ENCODE measurements at regions of chr3 and their contacts with region 1.

Region 1: GRCh38 chr3:100463002-100463401 is 29.4 kb upstream of the TMEM45A start:
- DNase-seq: peak; percentile 65
- CTCF ChIP-seq: peak; percentile 80

Region 2: DNA sequence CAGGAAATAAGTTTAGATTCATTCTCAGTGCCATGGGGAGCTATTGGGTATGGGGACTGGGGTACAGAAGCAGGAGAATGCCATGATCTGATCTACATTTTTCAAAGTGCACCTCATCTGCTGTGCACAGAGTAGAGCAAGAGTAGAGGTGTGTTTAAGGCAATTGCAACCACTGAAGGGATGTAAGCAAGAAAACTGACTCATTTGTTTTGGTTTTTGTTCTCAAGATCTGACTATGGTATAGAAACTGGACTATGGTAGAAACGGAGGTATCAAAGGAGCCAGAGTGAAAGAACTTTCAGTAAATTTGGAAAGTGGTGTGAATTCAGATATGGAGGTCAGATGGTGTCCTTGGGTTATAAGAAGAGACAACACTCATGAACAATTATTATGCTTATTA is 731.5 kb before region 1 on chr3:
- CTCF ChIA-PET with region 1: no interaction called
- POLR2A ChIA-PET with region 1: no interaction called
- DNase-seq: no peak
- CTCF ChIP-seq: no peak

Region 3: DNA sequence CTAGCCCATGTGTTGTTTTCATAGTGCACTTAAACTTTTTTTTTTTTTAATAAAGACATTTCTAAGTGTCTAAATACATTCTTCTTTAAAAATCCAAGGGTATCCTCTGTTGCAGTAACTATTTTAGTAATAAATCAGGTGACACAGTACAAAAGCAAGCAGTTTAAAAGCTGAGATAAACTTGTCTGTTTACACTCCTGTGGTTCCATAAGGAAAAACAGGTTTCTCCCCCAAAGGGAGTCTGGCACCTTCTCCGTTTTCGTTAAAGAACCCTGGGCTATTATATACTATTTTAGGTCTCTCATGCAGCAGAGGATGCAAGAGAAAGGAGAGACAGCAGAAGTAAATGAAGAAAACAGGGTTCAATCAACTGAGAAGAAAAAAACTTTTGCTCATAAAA is 13.8 kb before region 1 on chr3:
- CTCF ChIA-PET with region 1: interaction called, 45 read pairs
- POLR2A ChIA-PET with region 1: no interaction called
- DNase-seq: no peak
- CTCF ChIP-seq: no peak

Region 4: GRCh38 chr3:100486808-100487207 is 23.8 kb after region 1 on chr3:
- CTCF ChIA-PET with region 1: interaction called, 28 read pairs
- POLR2A ChIA-PET with region 1: interaction called, 4 read pairs
- DNase-seq: no peak
- CTCF ChIP-seq: no peak

Region 5: GRCh38 chr3:100590114-100590839 is 127.3 kb after region 1 on chr3:
- CTCF ChIA-PET with region 1: interaction called, 193 read pairs
- POLR2A ChIA-PET with region 1: no interaction called
- DNase-seq: peak; percentile 73
- CTCF ChIP-seq: peak; percentile 77

Region 6: GRCh38 chr3:100634493-100635272 is 171.7 kb after region 1 on chr3:
- CTCF ChIA-PET with region 1: interaction called, 12 read pairs
- POLR2A ChIA-PET with region 1: no interaction called
- DNase-seq: peak; percentile 14
- CTCF ChIP-seq: peak; percentile 12